ENCODE measurements at regions of chr1 and their contacts with region 1.

Region 1: GRCh38 chr1:13662493-13662892 is 37.5 kb upstream of the PRDM2 start:
- DNase-seq: no peak

Region 2: DNA sequence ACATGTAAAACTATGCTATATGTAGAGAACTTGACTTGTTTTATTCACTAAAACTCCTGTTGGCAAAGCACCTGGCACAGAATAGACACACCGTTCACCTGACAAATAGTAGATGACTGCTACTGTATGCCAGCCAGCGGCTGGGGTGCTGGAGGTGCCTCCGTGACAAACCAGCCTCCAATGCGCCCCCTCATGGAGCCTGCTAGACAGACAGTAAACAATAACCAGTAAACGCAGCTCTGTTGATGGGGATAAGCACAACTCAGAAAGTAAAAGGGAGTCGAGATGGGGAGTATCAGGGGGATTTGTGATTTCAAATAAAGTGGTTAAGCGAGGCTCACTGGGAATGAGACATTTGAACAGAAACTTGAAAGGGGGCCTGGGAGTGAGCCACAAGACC is 144.7 kb after region 1 on chr1:
- intact Hi-C with region 1: loop called (anchors 10 kb)
- DNase-seq: peak in 15 of 42 donors; percentile 34 to 73 (median 43)

Measured in head of caudate nucleus (tissue), 42 donors.